ENCODE measurements at regions of chr21 and their contacts with region 1.

Region 1: DNA sequence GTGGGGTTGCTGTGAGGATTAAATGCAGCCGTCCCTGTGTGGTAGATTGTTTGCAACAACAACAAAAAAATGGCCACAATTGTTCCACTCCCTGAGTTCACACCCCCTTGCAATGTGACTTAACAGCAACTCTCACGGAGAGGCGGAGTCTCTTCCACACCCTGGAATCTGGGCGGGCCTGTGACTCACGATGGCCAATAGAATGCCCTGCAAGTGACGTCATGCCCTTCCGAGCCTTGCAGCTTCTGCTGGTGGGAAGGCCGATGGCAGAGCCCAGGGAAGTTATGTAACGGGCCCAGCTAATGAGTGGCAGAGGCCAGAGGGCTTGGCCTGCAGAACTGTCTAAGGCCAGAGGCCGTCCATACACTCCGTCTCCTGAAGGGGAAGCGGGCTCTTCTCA is 87.9 kb downstream of the RIPK4 start:
- DNase-seq: peak; percentile 99
- H3K4me3 ChIP-seq: peak overlapping the region in 2 of 3 experiments; percentile 37 to 40
- H3K27ac ChIP-seq: peak overlapping the region; percentile 94
- H3K4me1 ChIP-seq: peaks cover 61% of the 10 kb centered on the region
- H3K27me3 ChIP-seq: no peaks in the 10 kb centered on the region
- CTCF ChIP-seq: no peak

Region 2: GRCh38 chr21:41283211-41283818 is 395.6 kb before region 1 on chr21:
- CTCF ChIA-PET with region 1: no interaction called
- dilution Hi-C with region 1: no loop called
- in situ Hi-C with region 1: no loop called
- intact Hi-C with region 1: loop called (anchors 10 kb)
- DNase-seq: peak; percentile 69
- H3K4me3 ChIP-seq: no peak overlapping the region
- H3K27ac ChIP-seq: no peak overlapping the region
- H3K4me1 ChIP-seq: no peaks in the 10 kb centered on the region
- H3K27me3 ChIP-seq: no peaks in the 10 kb centered on the region
- CTCF ChIP-seq: peak; percentile 82 to 83

Region 3: DNA sequence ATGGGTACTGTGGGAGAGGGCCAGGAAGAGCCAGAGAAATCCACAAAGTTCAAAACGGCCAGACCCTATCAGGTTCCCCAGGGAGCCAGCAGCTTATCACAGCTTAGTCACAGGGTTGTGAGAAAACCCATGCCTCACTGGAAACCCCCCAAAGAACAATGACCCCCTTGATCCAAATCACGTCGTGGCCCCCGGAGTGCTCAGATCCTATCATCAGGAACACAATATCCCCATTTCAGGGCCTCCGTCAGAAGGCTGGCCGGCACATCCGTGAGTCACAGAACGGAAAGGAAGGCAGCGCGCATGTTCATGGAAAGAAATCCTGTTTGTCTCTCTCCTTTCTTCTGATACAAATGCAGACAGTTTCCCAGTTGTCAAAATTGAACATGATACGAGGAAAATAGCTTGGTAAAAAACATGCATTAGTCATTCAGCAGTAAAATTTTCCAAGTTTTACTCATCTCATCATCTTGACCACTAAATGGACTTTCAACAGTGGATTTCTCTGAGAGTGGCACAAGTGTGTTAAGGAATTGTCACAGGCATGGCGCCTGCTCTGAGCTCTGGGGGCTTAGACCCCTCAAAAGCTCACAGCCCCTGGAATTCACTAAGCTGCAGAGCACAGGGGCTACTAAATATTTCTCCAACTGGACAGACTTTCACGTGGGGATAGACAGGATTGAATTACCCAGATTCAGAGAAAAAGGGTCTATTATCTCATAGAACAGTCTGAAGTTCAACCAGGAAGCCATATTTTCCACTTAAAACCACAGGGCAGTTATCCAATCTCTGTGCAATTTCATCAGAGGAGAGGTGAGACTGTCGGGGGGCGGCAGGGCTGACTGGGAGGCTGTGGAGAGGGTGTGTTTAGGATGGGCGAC is 36.9 kb before region 1 on chr21:
- CTCF ChIA-PET with region 1: no interaction called
- dilution Hi-C with region 1: no loop called
- in situ Hi-C with region 1: no loop called
- intact Hi-C with region 1: loop called (anchors 2 kb)
- DNase-seq: peak; percentile 97
- H3K4me3 ChIP-seq: no peak overlapping the region
- H3K27ac ChIP-seq: peak overlapping the region; percentile 97
- H3K4me1 ChIP-seq: peaks cover 42% of the 10 kb centered on the region
- H3K27me3 ChIP-seq: no peaks in the 10 kb centered on the region
- CTCF ChIP-seq: no peak

Region 4: GRCh38 chr21:41653954-41654491 is 24.9 kb before region 1 on chr21:
- CTCF ChIA-PET with region 1: no interaction called
- dilution Hi-C with region 1: no loop called
- in situ Hi-C with region 1: no loop called
- intact Hi-C with region 1: no loop called
- DNase-seq: peak; percentile 60
- H3K4me3 ChIP-seq: no peak overlapping the region
- H3K27ac ChIP-seq: peak overlapping the region; percentile 21
- H3K4me1 ChIP-seq: peaks cover 39% of the 10 kb centered on the region
- H3K27me3 ChIP-seq: no peaks in the 10 kb centered on the region
- CTCF ChIP-seq: no peak

Region 5: DNA sequence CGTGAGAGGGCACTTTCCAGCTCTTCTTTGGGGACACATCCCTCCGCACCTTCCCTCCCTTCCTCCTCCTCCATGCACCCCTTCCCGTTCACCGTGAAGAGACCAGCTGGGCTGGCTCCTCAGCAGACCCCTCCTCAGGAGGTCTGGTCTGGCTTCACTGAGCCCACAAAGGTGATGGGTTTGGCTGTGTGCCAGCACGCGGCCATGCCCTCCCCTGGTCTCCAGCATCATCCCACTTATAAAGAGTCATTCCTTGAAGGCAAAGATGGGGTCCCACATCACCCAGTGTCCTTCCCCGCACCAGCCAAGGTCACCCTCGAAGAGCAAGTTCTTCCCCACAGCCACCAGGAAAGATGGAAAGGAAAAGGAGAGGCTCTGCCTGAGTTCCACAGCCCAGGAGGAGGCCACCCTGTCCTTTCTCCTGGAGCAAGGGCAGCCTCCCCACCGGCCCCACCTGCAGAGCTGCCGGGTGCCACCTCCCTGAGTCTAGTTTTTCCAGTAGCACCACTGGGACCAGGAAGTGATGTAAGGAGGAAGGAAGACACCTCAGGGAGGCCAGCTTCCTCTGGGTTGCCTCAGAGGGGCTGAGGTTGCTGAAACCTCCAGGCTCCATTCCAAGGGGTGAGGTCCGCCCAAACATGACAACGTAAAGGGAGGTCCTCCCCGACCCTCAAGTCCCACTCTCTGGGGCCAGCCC is 55.2 kb after region 1 on chr21:
- CTCF ChIA-PET with region 1: interaction called, 4 read pairs
- dilution Hi-C with region 1: loop called (anchors 5 kb)
- in situ Hi-C with region 1: no loop called
- intact Hi-C with region 1: no loop called
- DNase-seq: no peak
- H3K4me3 ChIP-seq: no peak overlapping the region
- H3K27ac ChIP-seq: no peak overlapping the region
- H3K4me1 ChIP-seq: peaks cover 17% of the 10 kb centered on the region
- H3K27me3 ChIP-seq: no peaks in the 10 kb centered on the region
- CTCF ChIP-seq: no peak

Region 6: DNA sequence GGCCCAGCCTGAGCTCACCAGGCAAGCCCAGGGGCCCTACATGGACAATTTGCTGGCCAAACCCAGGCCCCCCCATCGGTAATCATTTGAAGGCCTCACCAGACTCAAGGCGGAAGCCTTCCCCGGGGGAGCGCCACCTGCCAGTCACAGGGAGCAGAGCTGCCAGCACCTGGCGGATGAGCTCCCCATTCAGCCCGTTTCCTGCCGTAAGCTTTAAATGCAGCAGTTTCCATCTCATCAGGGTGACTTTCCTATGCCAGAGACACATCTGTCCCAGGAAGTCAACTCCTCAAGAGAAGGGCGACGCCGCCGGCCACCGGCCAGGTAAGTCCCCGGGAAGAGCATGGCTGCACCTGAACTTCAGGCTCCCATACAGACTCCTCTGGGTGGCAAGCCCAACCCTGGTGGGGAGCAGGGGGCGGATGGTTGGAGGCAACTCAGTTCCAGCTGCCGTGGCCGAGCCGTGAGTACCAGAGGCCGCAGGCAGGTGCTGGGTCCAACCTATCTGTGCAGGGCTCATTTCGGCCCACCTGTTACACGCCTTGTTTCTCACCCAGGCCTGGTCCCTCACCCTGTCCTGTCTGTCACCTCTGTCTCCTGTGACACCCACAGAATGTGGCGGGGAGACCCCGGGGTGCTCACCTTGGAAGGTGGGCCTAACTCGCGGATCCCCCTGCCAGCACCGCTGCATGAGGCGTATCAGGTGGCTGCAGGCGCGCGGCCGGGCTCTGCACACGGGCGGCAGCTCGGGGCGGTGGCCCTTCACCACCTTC is 67.2 kb after region 1 on chr21:
- CTCF ChIA-PET with region 1: no interaction called
- dilution Hi-C with region 1: no loop called
- in situ Hi-C with region 1: no loop called
- intact Hi-C with region 1: no loop called
- DNase-seq: no peak
- H3K4me3 ChIP-seq: no peak overlapping the region
- H3K27ac ChIP-seq: no peak overlapping the region
- H3K4me1 ChIP-seq: peaks cover 17% of the 10 kb centered on the region
- H3K27me3 ChIP-seq: no peaks in the 10 kb centered on the region
- CTCF ChIP-seq: no peak

Region 7: GRCh38 chr21:41768437-41769061 is 89.6 kb after region 1 on chr21:
- CTCF ChIA-PET with region 1: interaction called, 3 read pairs
- dilution Hi-C with region 1: loop called (anchors 5 kb)
- in situ Hi-C with region 1: no loop called
- intact Hi-C with region 1: loop called (anchors 1 kb)
- DNase-seq: peak; percentile 87
- H3K4me3 ChIP-seq: peak overlapping the region; percentile 87 to 94 (median 92)
- H3K27ac ChIP-seq: peak overlapping the region; percentile 95
- H3K4me1 ChIP-seq: peaks cover 28% of the 10 kb centered on the region
- H3K27me3 ChIP-seq: no peaks in the 10 kb centered on the region
- CTCF ChIP-seq: peak; percentile 24 to 47

Region 8: GRCh38 chr21:41903559-41904351 is 224.8 kb after region 1 on chr21:
- CTCF ChIA-PET with region 1: no interaction called
- dilution Hi-C with region 1: no loop called
- in situ Hi-C with region 1: no loop called
- intact Hi-C with region 1: no loop called
- DNase-seq: no peak
- H3K4me3 ChIP-seq: no peak overlapping the region
- H3K27ac ChIP-seq: no peak overlapping the region
- H3K4me1 ChIP-seq: no peaks in the 10 kb centered on the region
- H3K27me3 ChIP-seq: no peaks in the 10 kb centered on the region
- CTCF ChIP-seq: no peak